HEK293 (cell line): ENCODE measurements at regions of chr6 and their contacts with region 1.

Region 1: GRCh38 chr6:32700391-32701040 is 34.1 kb upstream of the HLA-DQB1 start:
- H3K4me3 ChIP-seq: no peak overlapping the region
- H3K27ac ChIP-seq: no peak overlapping the region
- H3K4me1 ChIP-seq: no peaks in the 10 kb centered on the region
- CTCF ChIP-seq: peak; percentile 85

Region 2: GRCh38 chr6:32244946-32245398 is 455.5 kb before region 1 on chr6:
- CTCF ChIA-PET with region 1: interaction called, 14 read pairs
- POLR2A ChIA-PET with region 1: no interaction called
- H3K4me3 ChIP-seq: no peak overlapping the region
- H3K27ac ChIP-seq: no peak overlapping the region
- H3K4me1 ChIP-seq: no peaks in the 10 kb centered on the region
- CTCF ChIP-seq: peak; percentile 87

Region 3: GRCh38 chr6:32424589-32425300 is 275.8 kb before region 1 on chr6:
- CTCF ChIA-PET with region 1: interaction called, 27 read pairs
- POLR2A ChIA-PET with region 1: no interaction called
- H3K4me3 ChIP-seq: no peak overlapping the region
- H3K27ac ChIP-seq: no peak overlapping the region
- H3K4me1 ChIP-seq: no peaks in the 10 kb centered on the region
- CTCF ChIP-seq: no peak

Region 4: DNA sequence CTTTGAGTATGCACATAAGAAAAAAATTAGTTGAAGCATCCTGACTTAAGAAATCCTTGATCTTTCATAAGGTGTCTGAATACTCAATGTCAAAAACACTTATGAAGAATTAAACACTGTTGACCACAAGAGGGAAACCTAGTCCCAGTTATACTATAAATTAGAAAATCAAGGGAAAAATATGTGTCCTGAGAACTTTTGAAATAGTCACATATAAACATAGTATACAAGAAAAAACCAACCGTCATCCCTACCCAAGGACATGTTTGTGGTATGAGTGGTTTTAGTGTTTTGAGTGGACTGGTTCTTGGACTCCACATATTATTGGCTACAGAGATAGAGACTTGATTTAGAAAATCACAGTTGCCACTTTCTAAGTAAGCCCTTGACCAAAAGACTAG is 268.5 kb before region 1 on chr6:
- CTCF ChIA-PET with region 1: interaction called, 42 read pairs
- POLR2A ChIA-PET with region 1: no interaction called
- H3K4me3 ChIP-seq: no peak overlapping the region
- H3K27ac ChIP-seq: no peak overlapping the region
- H3K4me1 ChIP-seq: no peaks in the 10 kb centered on the region
- CTCF ChIP-seq: no peak

Region 5: GRCh38 chr6:32622545-32623401 is 77.7 kb before region 1 on chr6:
- CTCF ChIA-PET with region 1: interaction called, 18 read pairs
- POLR2A ChIA-PET with region 1: no interaction called
- H3K4me3 ChIP-seq: no peak overlapping the region
- H3K27ac ChIP-seq: no peak overlapping the region
- H3K4me1 ChIP-seq: peaks cover 18% of the 10 kb centered on the region
- CTCF ChIP-seq: no peak

Region 6: DNA sequence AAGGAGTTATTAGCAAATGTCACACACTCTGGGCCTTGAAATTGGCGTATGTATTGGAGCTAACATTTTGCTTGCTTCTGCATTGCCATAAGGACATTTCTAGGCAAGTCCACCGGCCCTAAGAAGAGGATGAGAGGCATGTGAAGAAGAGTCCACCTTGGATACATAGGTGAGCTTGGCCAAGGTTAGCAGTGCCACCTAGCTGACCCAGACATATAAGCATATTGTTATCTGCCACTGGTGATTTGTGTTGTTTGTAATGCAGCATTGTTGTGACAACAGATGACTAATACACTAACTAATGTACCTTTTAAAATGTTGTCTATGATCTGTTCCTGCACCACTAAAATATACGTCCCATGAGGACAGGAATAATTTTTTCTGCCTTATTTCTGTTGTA is 15.9 kb after region 1 on chr6:
- CTCF ChIA-PET with region 1: interaction called, 27 read pairs
- POLR2A ChIA-PET with region 1: no interaction called
- H3K4me3 ChIP-seq: no peak overlapping the region
- H3K27ac ChIP-seq: no peak overlapping the region
- H3K4me1 ChIP-seq: no peaks in the 10 kb centered on the region
- CTCF ChIP-seq: no peak

Region 7: DNA sequence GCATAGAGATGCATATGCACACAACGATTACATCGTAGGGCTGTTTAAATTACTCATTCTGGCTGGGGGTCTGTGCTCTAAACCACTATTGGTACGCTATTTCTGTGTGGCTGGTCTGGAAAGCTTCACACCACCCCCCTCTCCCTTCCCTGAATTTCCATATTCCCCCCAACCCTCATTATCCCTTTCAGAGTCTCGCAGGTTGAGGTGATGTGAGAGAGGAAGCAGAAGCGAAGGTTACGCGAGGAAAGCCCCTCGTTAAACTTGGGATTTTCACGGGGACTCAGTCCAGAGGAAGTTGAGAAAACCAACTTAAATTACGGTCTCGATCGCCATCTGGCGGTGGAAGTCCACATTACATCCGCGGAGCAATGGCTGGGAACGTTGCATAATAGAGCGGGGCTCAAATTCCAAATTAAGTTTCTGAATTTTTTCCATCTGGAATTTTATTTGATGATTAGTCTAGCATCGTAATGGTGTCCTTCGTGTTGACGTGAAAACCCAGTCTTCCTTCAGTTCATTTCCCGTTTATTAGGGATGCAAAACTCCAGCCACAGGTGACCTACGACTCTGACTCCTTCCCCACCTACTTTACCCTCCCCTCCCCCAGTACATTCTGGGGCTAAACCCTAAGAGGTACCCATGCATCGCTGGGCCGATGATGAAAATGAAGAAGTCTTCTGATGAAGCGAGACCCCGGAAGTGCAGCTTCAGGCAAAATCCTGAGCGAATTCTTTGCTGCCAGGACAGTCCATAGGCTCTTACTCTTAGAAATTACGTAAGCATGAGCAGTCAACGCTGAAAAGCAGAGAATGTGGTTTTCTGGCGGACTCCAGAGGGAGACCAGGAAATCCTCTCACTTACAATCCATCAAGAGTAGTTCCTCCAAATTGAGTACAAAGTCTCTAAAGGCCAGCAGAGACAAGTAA is 96.6 kb after region 1 on chr6:
- CTCF ChIA-PET with region 1: interaction called, 16 read pairs
- POLR2A ChIA-PET with region 1: interaction called, 3 read pairs
- H3K4me3 ChIP-seq: peak overlapping the region; percentile 19
- H3K27ac ChIP-seq: no peak overlapping the region
- H3K4me1 ChIP-seq: no peaks in the 10 kb centered on the region
- CTCF ChIP-seq: peak; percentile 72

Region 8: GRCh38 chr6:32952817-32953739 is 252.6 kb after region 1 on chr6 and contains the start of gene HLA-DMA:
- CTCF ChIA-PET with region 1: no interaction called
- POLR2A ChIA-PET with region 1: no interaction called
- H3K4me3 ChIP-seq: no peak within 1 kb of the TSS
- H3K27ac ChIP-seq: no peak within 1 kb of the TSS
- H3K4me1 ChIP-seq: no peaks in the 10 kb centered on the region
- CTCF ChIP-seq: 0 out of 2 replicates have a peak, but pooled peaks have one; percentile 31